Common myeloid progenitor, CD34-positive (primary cell): ENCODE measurements at regions of chr16 and their contacts with region 1.

Region 1: DNA sequence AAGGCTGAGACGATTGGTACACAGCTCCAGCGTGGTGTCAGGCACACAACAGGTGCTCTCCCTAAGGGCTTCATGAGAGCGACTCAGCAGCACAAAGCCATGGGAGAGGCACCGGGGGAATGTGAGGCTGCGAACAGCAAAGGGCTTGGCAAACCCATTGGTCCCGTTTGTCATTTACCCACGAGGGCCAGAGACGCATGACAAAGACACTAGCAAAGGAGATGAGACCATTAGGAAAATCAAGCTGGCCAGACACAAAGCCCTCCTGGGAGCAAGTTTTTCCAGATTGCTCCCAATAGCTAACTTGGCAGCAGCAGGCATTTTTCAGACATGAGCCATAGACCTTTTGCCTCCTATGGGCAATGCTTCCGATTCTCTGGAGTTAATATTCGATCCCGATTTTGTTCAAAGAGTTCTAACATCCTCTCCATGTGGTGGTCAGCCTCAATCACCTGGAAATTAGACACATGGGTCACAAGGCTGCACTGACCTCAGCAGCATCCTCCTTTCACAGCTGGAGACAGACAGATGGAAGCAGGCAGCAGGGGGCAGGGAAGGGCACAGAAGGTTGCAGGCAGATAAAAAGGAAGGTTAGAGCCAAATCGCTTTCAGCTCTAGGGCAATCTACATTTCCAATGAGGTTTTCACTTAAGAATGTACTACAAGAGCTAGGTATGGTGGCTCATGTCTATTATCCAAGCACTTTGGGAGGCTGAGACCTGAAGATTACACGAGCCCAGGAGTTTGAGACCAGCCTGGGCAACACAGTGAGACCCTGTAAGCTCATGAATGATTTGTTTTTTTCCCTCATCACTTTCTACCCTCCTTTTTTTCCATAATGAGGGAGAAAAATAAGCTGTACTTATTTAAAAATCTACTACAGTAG is 38.1 kb downstream of the TK2 start:
- DNase-seq: peak in 2 of 3 donors; percentile 58 to 60
- H3K4me3 ChIP-seq: no peak overlapping the region
- H3K27ac ChIP-seq: no peak overlapping the region
- H3K4me1 ChIP-seq: peaks cover 5 to 41% (median 27%) of the 10 kb centered on the region in 4 experiments
- H3K27me3 ChIP-seq: no peaks in the 10 kb centered on the region

Region 2: GRCh38 chr16:66406534-66407221 is 105.2 kb before region 1 on chr16:
- CTCF ChIA-PET with region 1: interaction called, 11 read pairs
- POLR2A ChIA-PET with region 1: no interaction called
- DNase-seq: peak; percentile 61 to 74 (median 72)
- H3K4me3 ChIP-seq: peak overlapping the region; percentile 1 to 78 (median 69)
- H3K27ac ChIP-seq: no peak overlapping the region
- H3K4me1 ChIP-seq: peaks cover 0 to 15% (median 12%) of the 10 kb centered on the region in 4 experiments
- H3K27me3 ChIP-seq: peaks cover 0 to 13% (median 4%) of the 10 kb centered on the region in 5 experiments

Region 3: GRCh38 chr16:66490774-66491715 is 20.8 kb before region 1 on chr16:
- CTCF ChIA-PET with region 1: interaction called, 23 read pairs
- POLR2A ChIA-PET with region 1: no interaction called
- DNase-seq: peak; percentile 48 to 85 (median 76)
- H3K4me3 ChIP-seq: no peak overlapping the region
- H3K27ac ChIP-seq: no peak overlapping the region
- H3K4me1 ChIP-seq: peaks cover 0 to 26% (median 23%) of the 10 kb centered on the region in 4 experiments
- H3K27me3 ChIP-seq: peaks cover 0 to 2% (median 0%) of the 10 kb centered on the region in 5 experiments

Region 4: DNA sequence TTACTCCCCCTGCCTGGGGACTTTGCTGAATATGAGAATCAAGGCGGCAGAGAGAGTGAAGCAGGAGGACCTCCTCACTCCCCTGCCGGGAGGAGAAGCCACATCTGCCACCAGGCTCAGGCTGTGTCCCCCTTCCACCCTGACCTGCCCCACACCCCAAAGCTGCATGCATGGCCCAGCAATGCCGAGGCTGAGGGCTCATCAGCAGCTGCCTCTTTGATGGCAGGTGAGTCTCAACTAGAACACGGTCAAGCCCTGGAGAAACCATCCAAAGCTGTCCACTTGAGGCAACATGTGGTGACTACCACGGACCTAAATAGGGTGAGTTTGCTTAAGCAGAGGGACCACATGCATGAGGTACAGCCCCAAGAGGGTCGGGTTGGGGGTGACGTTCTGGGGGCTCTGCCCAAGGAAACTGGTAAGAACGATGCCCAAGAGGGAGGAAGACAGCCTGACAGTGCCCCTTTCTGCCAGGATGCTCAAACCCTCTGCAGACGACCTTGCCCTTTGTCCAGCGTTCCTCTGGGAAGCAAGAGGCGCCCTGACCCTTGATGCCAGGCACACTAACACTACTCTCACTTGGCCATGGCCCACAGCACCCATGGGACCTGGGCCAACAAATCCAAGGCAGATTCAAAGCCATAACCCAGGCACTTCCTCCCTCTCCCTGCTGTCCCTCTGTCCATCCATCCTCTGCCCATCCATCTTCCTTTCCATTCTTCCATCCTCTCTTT is 17.4 kb after region 1 on chr16:
- CTCF ChIA-PET with region 1: interaction called, 85 read pairs
- POLR2A ChIA-PET with region 1: interaction called, 10 read pairs
- DNase-seq: no peak
- H3K4me3 ChIP-seq: no peak overlapping the region
- H3K27ac ChIP-seq: no peak overlapping the region
- H3K4me1 ChIP-seq: peaks cover 14 to 30% (median 29%) of the 10 kb centered on the region in 4 experiments
- H3K27me3 ChIP-seq: no peaks in the 10 kb centered on the region

Region 5: DNA sequence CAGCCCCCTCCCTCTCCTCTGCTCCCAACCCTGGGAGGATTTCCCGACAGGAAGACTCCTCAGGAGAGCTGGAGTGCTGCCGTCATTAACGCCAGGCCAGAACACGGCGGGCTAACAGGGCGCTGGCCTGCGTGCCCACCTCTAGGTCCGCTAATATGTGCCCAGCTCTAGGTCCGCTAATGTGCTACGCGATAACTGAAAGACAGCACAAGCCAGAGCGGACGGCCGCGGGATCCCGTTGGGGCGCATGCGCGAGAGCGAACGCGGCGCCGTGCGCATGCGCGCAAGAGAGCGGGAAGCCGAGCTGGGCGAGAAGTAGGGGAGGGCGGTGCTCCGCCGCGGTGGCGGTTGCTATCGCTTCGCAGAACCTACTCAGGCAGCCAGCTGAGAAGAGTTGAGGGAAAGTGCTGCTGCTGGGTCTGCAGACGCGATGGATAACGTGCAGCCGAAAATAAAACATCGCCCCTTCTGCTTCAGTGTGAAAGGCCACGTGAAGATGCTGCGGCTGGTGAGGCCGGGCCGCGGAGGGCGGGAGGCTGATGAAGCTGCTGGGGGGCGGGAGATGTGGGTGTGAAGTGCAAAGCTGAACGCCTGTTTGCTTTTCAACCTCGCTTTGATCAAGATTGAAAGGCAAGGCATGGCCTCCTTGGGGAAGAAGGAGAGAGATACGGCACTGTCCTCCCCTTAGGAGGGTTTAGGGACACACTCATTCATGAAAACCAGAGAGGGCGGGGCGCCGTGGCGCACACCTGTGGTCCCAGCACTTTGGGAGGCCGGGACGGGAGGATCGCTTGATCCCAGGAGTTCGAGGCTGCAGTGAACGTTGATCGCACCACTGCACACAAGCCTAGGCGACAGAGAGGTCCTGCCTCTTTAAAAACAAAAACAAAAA is 40.7 kb after region 1 on chr16 and contains the start of gene CKLF:
- CTCF ChIA-PET with region 1: interaction called, 168 read pairs
- POLR2A ChIA-PET with region 1: no interaction called
- DNase-seq: peak; percentile 87 to 94 (median 93)
- H3K4me3 ChIP-seq: peak within 1 kb of the TSS; percentile 35 to 85 (median 71)
- H3K27ac ChIP-seq: peak within 1 kb of the TSS; percentile 36 to 88
- H3K4me1 ChIP-seq: peaks cover 26 to 72% (median 61%) of the 10 kb centered on the region in 4 experiments
- H3K27me3 ChIP-seq: no peaks in the 10 kb centered on the region

Region 6: GRCh38 chr16:66569827-66570405 is 58.1 kb after region 1 on chr16:
- CTCF ChIA-PET with region 1: interaction called, 20 read pairs
- POLR2A ChIA-PET with region 1: no interaction called
- DNase-seq: no peak
- H3K4me3 ChIP-seq: no peak overlapping the region
- H3K27ac ChIP-seq: no peak overlapping the region
- H3K4me1 ChIP-seq: peaks cover 9 to 43% (median 25%) of the 10 kb centered on the region in 4 experiments
- H3K27me3 ChIP-seq: no peaks in the 10 kb centered on the region

Region 7: DNA sequence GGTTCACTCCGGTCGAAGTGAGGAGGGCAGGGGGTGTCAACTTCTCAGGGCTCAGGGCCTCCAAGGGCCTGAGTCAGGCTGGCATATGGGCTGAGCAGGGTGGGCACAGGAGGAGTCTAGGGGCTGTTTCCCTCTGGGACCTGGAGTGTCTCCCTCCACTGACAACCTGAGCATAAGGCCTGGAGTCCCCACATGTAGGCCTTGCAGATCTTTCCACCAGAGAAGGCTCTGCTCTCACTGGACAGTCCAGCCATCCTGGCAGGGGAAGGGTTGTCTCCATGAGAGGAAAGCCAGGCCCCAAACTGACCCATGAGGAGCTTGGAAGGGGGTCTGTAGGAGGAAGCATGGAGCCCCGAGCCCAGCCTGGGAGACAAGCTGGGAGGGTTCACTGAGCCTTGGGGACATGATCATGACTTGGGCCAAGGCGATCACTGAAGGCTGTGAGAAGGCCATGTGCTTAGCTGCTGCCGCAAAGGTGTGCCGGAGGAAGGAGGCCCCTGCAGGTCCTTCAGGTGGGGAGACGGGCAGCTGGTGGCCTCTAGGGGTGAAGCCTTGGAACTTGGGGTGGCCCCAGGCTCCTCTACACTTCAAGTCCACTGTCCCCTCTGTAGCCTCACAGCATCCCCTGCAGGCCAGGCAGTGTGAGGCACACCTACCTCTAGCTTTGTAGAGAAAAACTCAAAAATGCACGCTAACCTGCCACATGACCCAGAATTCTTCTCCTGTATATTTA is 77.3 kb after region 1 on chr16:
- CTCF ChIA-PET with region 1: interaction called, 66 read pairs
- POLR2A ChIA-PET with region 1: interaction called, 6 read pairs
- DNase-seq: peak; percentile 88 to 92 (median 90)
- H3K4me3 ChIP-seq: no peak overlapping the region
- H3K27ac ChIP-seq: no peak overlapping the region
- H3K4me1 ChIP-seq: peaks cover 6 to 65% (median 54%) of the 10 kb centered on the region in 4 experiments
- H3K27me3 ChIP-seq: no peaks in the 10 kb centered on the region

Region 8: DNA sequence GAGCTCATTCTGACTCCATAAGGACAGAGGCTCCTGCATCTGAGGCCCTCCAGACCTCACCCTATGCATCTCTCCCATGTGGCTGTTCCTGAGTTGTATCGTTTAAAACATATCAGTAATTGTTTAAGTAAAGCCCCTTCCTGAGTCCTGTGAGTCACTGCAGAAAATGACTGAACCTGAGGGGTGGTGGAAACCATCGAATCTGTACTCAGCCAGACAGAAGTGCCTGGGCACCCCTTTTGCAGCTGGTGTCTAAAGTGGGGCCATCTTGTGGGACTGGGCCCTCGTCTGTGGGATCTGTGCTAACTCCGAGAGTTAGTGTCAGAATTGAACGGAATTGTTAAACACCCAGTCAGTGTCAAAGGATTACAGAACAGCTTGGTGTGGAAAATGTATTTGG is 118.0 kb after region 1 on chr16:
- CTCF ChIA-PET with region 1: no interaction called
- POLR2A ChIA-PET with region 1: no interaction called
- DNase-seq: no peak
- H3K4me3 ChIP-seq: no peak overlapping the region
- H3K27ac ChIP-seq: no peak overlapping the region
- H3K4me1 ChIP-seq: no peaks in the 10 kb centered on the region
- H3K27me3 ChIP-seq: no peaks in the 10 kb centered on the region